ENCODE measurements at regions of chr2 and their contacts with region 1.

Region 1: DNA sequence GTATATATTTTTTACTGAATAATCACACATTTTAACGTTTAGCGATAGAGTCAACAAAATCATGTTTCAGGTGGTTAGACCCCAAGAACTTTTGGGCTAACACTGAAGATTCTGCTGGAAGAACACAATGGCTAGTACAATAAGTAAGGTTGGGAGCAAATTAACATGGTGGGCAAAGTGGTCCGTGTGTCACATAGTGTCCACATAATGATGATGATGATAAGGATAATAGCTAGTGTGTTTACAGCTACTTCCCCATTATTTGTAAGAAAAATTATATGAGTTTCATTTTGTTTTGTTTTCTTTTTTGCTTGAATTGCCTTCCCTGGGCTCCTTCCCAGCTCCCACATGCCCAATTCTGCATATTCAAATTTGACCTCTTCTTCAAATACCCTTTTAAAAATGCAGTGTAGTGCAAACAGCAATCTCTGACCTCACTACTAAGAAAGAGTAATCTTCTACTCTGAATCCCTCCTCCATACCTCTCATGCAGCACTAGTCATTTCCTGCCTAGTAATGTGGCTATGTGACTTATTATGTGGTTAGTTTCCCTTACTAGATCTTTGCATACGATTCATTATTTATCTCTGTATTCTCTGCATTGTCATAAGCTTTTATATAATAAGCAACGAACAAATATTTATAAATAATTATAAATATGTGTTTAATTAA is 16.9 kb upstream of the VPS54 start:
- DNase-seq: no peak
- H3K4me3 ChIP-seq: no peak overlapping the region
- H3K27ac ChIP-seq: no peak overlapping the region
- H3K4me1 ChIP-seq: no peaks in the 10 kb centered on the region
- H3K27me3 ChIP-seq: no peaks in the 10 kb centered on the region
- CTCF ChIP-seq: no peak
- EP300 ChIP-seq: no peak
- POLR2A ChIP-seq: no peak

Region 2: DNA sequence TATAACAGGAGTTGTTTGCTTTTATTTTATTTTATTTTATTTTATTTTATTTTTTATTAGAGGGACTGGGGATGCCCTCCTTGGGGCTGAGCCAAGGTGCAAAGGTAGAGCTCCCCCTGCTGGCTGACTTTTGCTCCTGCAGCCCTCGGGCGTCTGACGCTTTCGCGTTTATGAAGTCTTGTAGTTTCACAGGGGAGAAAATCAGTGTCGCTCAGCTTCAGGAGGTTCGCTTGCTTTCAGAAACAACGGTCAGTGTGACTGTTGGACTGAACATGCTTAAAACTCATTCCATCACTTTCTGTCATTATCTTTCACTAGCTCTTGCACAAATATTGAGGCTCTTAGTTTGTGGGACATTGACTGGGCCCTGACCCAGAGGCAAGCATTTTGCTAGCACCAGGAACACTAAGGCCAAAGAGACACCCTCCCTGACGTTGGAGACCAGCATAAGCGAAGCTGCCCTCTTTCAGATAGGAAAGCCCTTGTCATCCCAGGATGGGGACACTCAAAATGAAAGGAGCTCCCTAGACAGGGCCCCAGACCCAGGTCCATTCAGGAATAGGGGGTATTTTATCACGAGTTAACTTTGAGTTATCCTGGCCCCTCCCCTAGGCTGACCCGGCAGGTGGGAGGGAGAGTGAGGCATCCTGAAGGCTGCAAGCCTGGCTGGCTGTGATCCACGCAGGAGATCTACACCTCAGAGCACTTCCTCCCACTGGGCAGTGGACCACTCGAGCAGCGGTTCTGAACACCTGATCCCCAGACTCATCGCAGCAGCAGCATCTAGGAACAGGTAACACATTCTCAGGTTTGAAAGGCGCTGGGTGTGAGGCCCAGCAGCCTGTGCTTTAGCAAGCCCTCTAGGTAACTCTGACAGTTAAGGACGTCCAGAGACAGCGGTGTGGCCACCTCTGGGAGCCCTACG is 452.1 kb after region 1 on chr2:
- in situ Hi-C with region 1: loop called in 3 of 4 experiments (anchors 10 to 25 kb)
- intact Hi-C with region 1: no loop called
- DNase-seq: peak; percentile 78
- H3K4me3 ChIP-seq: no peak overlapping the region
- H3K27ac ChIP-seq: no peak overlapping the region
- H3K4me1 ChIP-seq: peaks cover 0 to 14% (median 5%) of the 10 kb centered on the region in 4 donors
- H3K27me3 ChIP-seq: no peaks in the 10 kb centered on the region
- CTCF ChIP-seq: peak; percentile 96 to 99 (median 98)
- EP300 ChIP-seq: no peak
- POLR2A ChIP-seq: no peak

Region 3: DNA sequence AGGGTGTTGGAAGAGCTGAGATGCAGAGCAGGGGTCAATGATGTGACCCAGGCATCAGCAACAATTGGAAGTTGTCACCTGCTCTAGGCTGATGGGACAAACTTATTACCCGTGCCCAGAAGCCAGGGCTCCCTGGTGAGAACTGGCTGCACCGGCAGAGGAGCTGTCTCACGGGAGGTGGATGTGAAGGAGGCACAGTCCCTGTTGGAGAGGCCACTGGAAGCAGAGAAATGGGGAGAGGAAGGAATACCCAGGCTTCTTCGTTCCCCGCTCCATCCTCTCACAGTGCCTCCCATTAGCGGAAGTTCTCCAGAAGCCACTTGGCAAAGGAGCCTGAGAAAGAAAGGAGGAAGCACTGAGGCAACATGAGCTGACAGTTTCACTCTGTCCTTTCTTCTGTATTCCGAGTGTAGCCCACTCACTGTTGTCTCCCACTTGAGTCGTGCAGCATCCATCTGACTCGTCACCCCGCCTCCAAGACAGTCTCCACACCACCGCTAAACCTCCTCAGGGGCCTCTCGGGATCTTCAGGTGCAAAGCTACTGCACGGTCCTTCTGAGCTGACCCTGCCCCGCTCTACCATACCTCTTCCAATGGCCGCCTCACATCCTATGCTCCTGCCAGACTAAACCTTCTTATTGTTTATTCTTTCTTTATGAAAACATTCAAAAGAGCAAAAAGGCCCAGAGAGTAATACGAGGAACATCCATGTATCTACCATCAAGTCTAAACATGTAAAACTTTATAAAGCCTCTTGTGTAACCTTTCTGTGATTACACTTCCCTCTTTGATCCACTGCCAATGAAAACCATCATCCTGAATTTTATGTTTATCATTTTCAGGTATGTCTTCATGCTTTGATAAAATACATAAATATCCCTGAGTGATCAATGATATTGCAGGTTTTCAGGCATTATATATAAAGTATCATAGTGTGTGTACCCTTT is 468.9 kb after region 1 on chr2:
- in situ Hi-C with region 1: no loop called
- intact Hi-C with region 1: loop called (anchors 10 kb)
- DNase-seq: no peak
- H3K4me3 ChIP-seq: no peak overlapping the region
- H3K27ac ChIP-seq: no peak overlapping the region
- H3K4me1 ChIP-seq: no peaks in the 10 kb centered on the region
- H3K27me3 ChIP-seq: no peaks in the 10 kb centered on the region
- CTCF ChIP-seq: no peak
- EP300 ChIP-seq: no peak
- POLR2A ChIP-seq: no peak

Region 4: DNA sequence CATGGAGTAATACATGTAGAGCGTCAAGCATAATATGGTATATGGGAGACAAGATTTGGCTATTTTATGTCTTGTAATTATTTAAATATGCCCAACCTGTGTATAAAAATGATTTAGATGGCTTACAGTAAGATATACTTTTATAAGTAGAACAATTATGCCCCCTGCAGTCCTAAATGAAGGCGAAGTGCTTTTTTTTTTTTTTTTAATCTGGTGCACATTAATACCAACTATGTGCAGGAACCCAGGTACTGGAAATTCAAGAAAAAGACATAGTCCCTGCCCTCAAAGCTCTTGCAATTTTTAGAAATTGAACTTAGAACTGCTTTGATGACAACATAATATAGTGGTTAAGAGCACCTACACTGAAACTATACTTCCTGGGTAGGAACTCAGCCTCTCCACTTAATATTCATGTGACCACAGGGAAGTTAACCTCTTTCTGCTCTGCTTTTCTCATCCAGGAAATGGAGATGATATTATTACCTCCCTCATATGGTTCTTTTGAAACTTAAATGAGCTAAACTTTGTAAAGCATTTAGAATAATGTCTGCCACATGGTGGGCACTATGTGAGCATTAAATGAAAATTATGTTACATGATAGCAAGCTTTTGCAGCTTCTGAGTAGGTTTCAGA is 526.1 kb after region 1 on chr2:
- in situ Hi-C with region 1: loop called in 1 of 4 experiments (anchors 25 kb)
- intact Hi-C with region 1: no loop called
- DNase-seq: no peak
- H3K4me3 ChIP-seq: no peak overlapping the region
- H3K27ac ChIP-seq: no peak overlapping the region
- H3K4me1 ChIP-seq: peaks cover 0 to 14% (median 2%) of the 10 kb centered on the region in 4 donors
- H3K27me3 ChIP-seq: no peaks in the 10 kb centered on the region
- CTCF ChIP-seq: peak in 4 of 5 experiments; percentile 34 to 51 (median 39)
- EP300 ChIP-seq: no peak
- POLR2A ChIP-seq: no peak

Region 5: DNA sequence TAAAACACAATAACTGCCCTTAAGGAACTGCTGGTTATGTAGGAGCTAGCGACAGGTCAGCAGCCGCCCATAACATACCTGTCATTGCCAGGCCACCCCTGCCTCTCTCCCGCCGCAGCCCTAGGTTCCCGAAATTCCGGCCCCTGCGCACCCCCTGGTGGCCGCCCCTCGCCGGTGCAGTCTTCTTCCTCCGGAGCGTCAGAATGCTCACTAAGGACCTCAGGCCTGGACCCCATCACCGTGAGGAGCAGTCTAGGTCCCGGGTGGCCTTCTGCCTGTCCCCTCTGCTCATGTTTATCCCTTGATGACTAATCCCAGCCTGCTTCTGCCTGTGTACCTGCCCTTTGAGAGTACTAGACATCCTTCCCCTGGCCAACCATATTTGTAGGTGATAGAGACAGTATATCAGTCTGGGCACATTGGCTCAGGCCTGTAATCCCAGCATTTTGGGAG is 837.3 kb after region 1 on chr2:
- in situ Hi-C with region 1: loop called in 1 of 4 experiments (anchors 25 kb)
- intact Hi-C with region 1: no loop called
- DNase-seq: peak; percentile 84
- H3K4me3 ChIP-seq: peak overlapping the region in 1 of 4 donors; percentile 20
- H3K27ac ChIP-seq: no peak overlapping the region
- H3K4me1 ChIP-seq: peaks cover 0 to 15% (median 6%) of the 10 kb centered on the region in 4 donors
- H3K27me3 ChIP-seq: no peaks in the 10 kb centered on the region
- CTCF ChIP-seq: peak; percentile 92 to 97 (median 95)
- EP300 ChIP-seq: no peak
- POLR2A ChIP-seq: no peak